ENCODE measurements at regions of chr5 and their contacts with region 1.

Region 1: GRCh38 chr5:43120720-43121564 is at the start of gene ZNF131:
- DNase-seq: peak; percentile 95 to 99 (median 97)
- ATAC-seq: peak; percentile 77 to 86
- H3K4me3 Mint-ChIP-seq: peak within 1 kb of the TSS; percentile 89 to 100 (median 94)
- H3K27ac Mint-ChIP-seq: peak within 1 kb of the TSS; percentile 93 to 99 (median 98)
- H3K4me1 Mint-ChIP-seq: peaks cover 15 to 45% (median 39%) of the 10 kb centered on the region in 4 donors
- H3K27me3 Mint-ChIP-seq: no peaks in the 10 kb centered on the region
- polyA plus RNA-seq, gene ZNF131: 51.8 to 57.1 (median 55.5) TPM

Region 2: GRCh38 chr5:42908509-42909488 is 212.1 kb before region 1 on chr5:
- POLR2A ChIA-PET with region 1: interaction called, 30 read pairs
- DNase-seq: peak; percentile 78 to 96 (median 90)
- ATAC-seq: peak; percentile 92 to 93
- H3K4me3 Mint-ChIP-seq: peak overlapping the region; percentile 82 to 98 (median 94)
- H3K27ac Mint-ChIP-seq: peak overlapping the region; percentile 89 to 98 (median 97)
- H3K4me1 Mint-ChIP-seq: peaks cover 2 to 22% (median 18%) of the 10 kb centered on the region in 4 donors
- H3K27me3 Mint-ChIP-seq: peaks cover 0 to 3% (median 0%) of the 10 kb centered on the region in 5 donors

Region 3: GRCh38 chr5:42994246-42995151 is 126.4 kb before region 1 on chr5:
- POLR2A ChIA-PET with region 1: interaction called, 95 read pairs
- DNase-seq: peak; percentile 71 to 93 (median 87)
- ATAC-seq: peak; percentile 56 to 63
- H3K4me3 Mint-ChIP-seq: peak overlapping the region; percentile 87 to 100 (median 100)
- H3K27ac Mint-ChIP-seq: peak overlapping the region; percentile 97 to 100 (median 100)
- H3K4me1 Mint-ChIP-seq: peaks cover 12 to 38% (median 31%) of the 10 kb centered on the region in 4 donors
- H3K27me3 Mint-ChIP-seq: no peaks in the 10 kb centered on the region

Region 4: GRCh38 chr5:43019614-43020293 is 101.2 kb before region 1 on chr5:
- POLR2A ChIA-PET with region 1: interaction called, 76 read pairs
- DNase-seq: peak; percentile 68 to 94 (median 86)
- ATAC-seq: peak; percentile 65 to 67
- H3K4me3 Mint-ChIP-seq: peak overlapping the region; percentile 94 to 99 (median 98)
- H3K27ac Mint-ChIP-seq: peak overlapping the region; percentile 97 to 100 (median 100)
- H3K4me1 Mint-ChIP-seq: peaks cover 19 to 44% (median 40%) of the 10 kb centered on the region in 4 donors
- H3K27me3 Mint-ChIP-seq: no peaks in the 10 kb centered on the region

Region 5: DNA sequence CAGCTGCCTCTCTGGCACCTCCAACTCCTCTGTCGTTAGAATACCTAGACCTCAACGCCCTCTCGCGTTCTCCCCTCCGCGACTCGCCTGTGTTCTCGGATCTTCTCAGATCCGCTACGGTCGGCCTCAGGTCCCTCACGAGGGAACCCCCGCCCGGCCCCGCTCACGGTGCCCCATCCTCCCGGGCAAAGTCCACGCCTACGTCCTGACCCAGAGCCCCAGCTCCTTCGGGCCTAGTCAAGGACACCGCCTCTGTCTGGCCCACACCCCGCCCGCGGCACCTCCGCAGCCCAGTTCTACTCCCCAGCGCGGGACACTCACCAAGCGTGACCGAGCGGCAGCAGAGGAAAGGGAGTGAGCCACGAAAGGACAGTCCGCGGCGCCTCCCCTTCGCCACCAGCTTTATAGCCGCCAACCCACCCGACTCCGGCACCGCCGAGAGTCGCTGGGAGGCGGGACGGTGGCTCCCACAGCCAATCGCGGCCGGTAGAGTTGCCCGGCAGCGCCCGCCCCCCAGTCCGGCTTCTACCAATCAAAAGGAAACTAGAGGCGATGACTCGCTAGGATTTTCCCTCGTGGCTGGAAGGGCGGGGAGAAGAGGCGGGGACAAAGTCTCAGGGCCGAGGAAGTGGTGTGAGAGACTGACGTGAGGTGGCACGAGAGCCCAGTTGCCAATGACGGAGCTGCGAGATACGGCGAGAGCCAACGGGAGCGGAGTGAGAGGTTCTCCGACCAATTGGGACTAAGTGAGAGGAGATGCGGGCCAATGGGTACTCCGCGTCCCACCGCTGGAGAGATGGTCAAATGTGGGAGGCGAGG is 192.3 kb after region 1 on chr5 and contains the start of gene HMGCS1:
- POLR2A ChIA-PET with region 1: interaction called, 38 read pairs
- DNase-seq: peak; percentile 94 to 100 (median 99)
- ATAC-seq: peak; percentile 90 to 92
- H3K4me3 Mint-ChIP-seq: peak within 1 kb of the TSS; percentile 90 to 99 (median 97)
- H3K27ac Mint-ChIP-seq: peak within 1 kb of the TSS; percentile 90 to 99 (median 96)
- H3K4me1 Mint-ChIP-seq: peaks cover 22 to 40% (median 34%) of the 10 kb centered on the region in 4 donors
- H3K27me3 Mint-ChIP-seq: peaks cover 0 to 2% (median 0%) of the 10 kb centered on the region in 5 donors
- polyA plus RNA-seq, gene HMGCS1: 4.0 to 11.6 (median 4.2) TPM

Region 6: DNA sequence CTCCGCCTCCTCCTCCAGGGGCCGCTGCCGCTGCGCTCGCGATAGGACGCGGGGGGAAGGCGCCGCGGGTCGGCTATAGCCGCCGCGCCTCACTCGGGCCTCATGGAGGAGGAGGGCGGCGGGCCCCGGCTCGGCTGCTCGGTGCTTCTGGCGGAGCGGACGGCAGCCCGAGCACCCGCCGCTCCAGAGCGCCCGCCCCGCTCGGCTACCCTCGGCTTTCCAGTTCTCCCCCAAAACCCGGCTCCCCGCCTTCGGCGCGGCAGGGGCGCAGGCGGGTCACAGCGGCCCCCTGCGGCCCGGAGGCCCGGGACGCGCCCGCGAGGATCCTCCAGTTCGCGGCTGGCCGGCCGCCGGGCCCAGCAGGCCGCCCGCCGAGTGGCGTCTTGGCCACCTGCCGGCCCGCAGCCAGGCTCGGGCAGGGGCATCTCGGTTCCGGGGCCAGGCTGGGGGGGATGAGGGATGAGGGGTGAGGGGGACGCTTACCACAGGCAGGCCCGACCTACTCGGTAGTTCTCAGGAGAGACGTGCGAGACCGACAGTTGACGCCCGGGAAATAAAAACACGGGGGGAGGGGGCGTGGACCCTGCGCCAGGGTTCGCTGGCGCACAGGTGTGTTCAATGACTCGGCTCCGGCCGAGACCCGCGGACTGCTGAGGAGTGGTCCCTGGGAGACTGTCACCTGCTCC is 436.1 kb after region 1 on chr5 and contains the start of gene PAIP1:
- POLR2A ChIA-PET with region 1: interaction called, 10 read pairs
- DNase-seq: peak; percentile 75 to 91 (median 81)
- ATAC-seq: peak; percentile 80 to 84
- H3K4me3 Mint-ChIP-seq: peak within 1 kb of the TSS in 9 of 10 donors; percentile 82 to 96 (median 93)
- H3K27ac Mint-ChIP-seq: peak within 1 kb of the TSS; percentile 93 to 100 (median 98)
- H3K4me1 Mint-ChIP-seq: peaks cover 4 to 9% (median 6%) of the 10 kb centered on the region in 4 donors
- H3K27me3 Mint-ChIP-seq: peaks cover 2 to 9% (median 4%) of the 10 kb centered on the region in 5 donors
- polyA plus RNA-seq, gene PAIP1: 31.3 to 45.7 (median 32.5) TPM

Measured in naive thymus-derived CD8-positive, alpha-beta T cell (primary cell).